ENCODE measurements at regions of chr7 and their contacts with region 1.

Region 1: DNA sequence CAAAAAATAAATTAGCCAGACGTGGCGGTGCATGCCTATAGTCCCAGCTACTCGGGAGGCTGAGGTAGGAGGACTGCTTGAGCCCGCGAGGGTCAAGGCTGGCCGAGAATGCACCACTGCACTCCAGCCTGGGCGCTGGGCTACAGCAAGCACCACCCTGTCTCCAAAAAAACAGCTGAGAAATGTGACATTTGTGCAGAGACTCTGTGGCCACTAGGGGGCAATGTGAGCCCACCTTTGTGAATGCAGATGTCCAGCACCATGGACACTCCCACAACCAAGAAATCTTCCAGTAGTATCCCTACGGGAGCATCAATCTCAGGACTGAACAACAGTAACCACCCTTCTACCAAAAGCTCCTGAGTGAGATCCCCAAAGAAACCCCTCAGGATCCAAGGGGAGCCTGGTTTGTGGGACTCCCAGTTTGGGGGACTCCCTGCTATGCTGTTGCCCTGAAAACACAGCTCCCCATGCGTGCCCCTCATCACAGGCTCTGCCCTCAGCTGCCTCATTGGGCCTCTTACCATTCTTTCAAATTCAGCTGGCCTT is 6.2 kb upstream of the AHCYL2 start:
- DNase-seq: peak; percentile 86
- ATAC-seq: peak; percentile 85
- H3K4me3 Mint-ChIP-seq: no peak overlapping the region
- H3K27ac Mint-ChIP-seq: no peak overlapping the region
- H3K4me1 Mint-ChIP-seq: peaks cover 17% of the 10 kb centered on the region
- H3K27me3 Mint-ChIP-seq: no peaks in the 10 kb centered on the region

Region 2: GRCh38 chr7:128997181-128997580 is 221.4 kb before region 1 on chr7:
- CTCF ChIA-PET with region 1: no interaction called
- POLR2A ChIA-PET with region 1: no interaction called
- DNase-seq: no peak
- ATAC-seq: no peak
- H3K4me3 Mint-ChIP-seq: no peak overlapping the region
- H3K27ac Mint-ChIP-seq: no peak overlapping the region
- H3K4me1 Mint-ChIP-seq: no peaks in the 10 kb centered on the region
- H3K27me3 Mint-ChIP-seq: no peaks in the 10 kb centered on the region

Region 3: DNA sequence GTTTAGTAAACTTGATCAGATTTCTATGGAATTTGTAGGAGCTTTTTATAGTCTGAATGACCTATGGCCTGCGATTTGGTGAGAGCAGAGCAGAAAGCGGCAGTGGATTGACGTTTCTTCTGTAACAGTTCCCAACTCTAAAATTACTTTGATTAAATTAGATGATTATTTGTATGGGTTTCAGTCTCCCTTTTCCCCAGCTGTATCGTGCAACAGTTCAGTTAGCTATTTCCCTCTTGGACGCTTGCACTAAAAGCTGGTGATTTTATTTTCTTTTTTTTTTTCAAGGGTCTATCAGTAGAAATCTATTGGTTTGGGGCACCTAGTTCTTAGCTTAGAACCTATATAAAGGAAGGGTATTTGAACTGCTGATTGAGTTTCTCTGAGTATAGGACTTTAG is 13.1 kb after region 1 on chr7:
- CTCF ChIA-PET with region 1: interaction called, 27 read pairs
- POLR2A ChIA-PET with region 1: no interaction called
- DNase-seq: no peak
- ATAC-seq: no peak
- H3K4me3 Mint-ChIP-seq: no peak overlapping the region
- H3K27ac Mint-ChIP-seq: no peak overlapping the region
- H3K4me1 Mint-ChIP-seq: peaks cover under 1% of the 10 kb centered on the region
- H3K27me3 Mint-ChIP-seq: no peaks in the 10 kb centered on the region

Region 4: DNA sequence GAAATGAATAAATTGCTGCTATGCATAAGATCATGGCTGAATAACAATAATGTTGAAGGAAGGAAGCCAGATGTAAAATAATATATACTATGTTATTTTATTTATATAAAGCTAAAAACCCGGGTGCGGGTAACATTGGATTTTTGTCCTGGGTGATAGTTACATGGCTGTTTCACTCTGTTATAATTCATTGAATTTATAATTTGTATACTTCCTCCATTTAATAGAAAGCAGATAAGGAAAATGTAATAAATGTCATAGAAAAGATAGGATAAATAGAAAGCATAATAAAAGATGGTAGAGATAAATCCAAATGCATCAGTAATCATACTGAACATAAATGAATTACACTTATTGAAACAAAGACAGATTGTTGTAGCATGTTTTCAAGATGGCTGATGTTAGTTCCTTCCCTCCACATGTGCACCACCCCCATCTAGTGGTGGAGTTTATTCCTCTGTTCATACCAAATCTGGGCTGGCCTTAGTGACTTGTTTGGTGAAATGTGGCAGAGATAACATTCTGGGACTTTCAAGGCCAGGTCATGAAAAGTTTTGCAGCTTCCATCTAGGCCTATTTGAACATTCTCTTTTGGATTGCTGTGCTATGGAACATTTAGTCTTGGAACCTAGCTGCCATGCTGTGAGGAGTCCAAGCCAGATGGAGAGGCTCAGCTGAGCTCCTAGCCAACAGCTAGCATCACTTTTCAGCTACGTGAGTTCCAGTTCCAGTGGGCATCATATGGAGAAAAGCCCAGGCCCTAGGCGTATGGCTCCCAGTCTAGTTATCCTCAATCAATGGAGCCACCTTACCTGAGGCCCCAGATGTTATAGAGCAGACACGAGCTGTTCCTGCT is 53.1 kb after region 1 on chr7:
- CTCF ChIA-PET with region 1: interaction called, 156 read pairs
- POLR2A ChIA-PET with region 1: no interaction called
- DNase-seq: peak; percentile 82
- ATAC-seq: peak; percentile 98
- H3K4me3 Mint-ChIP-seq: peak overlapping the region; percentile 61
- H3K27ac Mint-ChIP-seq: peak overlapping the region; percentile 61
- H3K4me1 Mint-ChIP-seq: peaks cover 3% of the 10 kb centered on the region
- H3K27me3 Mint-ChIP-seq: no peaks in the 10 kb centered on the region

Region 5: GRCh38 chr7:129292861-129293260 is 74.3 kb after region 1 on chr7:
- CTCF ChIA-PET with region 1: interaction called, 76 read pairs
- POLR2A ChIA-PET with region 1: interaction called, 3 read pairs
- DNase-seq: no peak
- ATAC-seq: no peak
- H3K4me3 Mint-ChIP-seq: no peak overlapping the region
- H3K27ac Mint-ChIP-seq: no peak overlapping the region
- H3K4me1 Mint-ChIP-seq: no peaks in the 10 kb centered on the region
- H3K27me3 Mint-ChIP-seq: no peaks in the 10 kb centered on the region

Region 6: GRCh38 chr7:129367700-129368388 is 149.3 kb after region 1 on chr7:
- CTCF ChIA-PET with region 1: interaction called, 35 read pairs
- POLR2A ChIA-PET with region 1: interaction called, 3 read pairs
- DNase-seq: peak; percentile 82
- ATAC-seq: peak; percentile 91
- H3K4me3 Mint-ChIP-seq: peak overlapping the region; percentile 16
- H3K27ac Mint-ChIP-seq: no peak overlapping the region
- H3K4me1 Mint-ChIP-seq: peaks cover 16% of the 10 kb centered on the region
- H3K27me3 Mint-ChIP-seq: peaks cover 2% of the 10 kb centered on the region

Region 7: GRCh38 chr7:129644634-129645230 is 426.1 kb after region 1 on chr7:
- CTCF ChIA-PET with region 1: interaction called, 10 read pairs
- POLR2A ChIA-PET with region 1: no interaction called
- DNase-seq: no peak
- ATAC-seq: no peak
- H3K4me3 Mint-ChIP-seq: no peak overlapping the region
- H3K27ac Mint-ChIP-seq: no peak overlapping the region
- H3K4me1 Mint-ChIP-seq: peaks cover 14% of the 10 kb centered on the region
- H3K27me3 Mint-ChIP-seq: no peaks in the 10 kb centered on the region

Measured in activated CD8-positive, alpha-beta T cell treated with anti-CD3 and anti-CD28 coated beads, Interleukin-2, amount 10 ng/mL, durations not matched to agents 7 days and 5 days (primary cell).